ENCODE measurements at regions of chr20 and their contacts with region 1.

Region 1: DNA sequence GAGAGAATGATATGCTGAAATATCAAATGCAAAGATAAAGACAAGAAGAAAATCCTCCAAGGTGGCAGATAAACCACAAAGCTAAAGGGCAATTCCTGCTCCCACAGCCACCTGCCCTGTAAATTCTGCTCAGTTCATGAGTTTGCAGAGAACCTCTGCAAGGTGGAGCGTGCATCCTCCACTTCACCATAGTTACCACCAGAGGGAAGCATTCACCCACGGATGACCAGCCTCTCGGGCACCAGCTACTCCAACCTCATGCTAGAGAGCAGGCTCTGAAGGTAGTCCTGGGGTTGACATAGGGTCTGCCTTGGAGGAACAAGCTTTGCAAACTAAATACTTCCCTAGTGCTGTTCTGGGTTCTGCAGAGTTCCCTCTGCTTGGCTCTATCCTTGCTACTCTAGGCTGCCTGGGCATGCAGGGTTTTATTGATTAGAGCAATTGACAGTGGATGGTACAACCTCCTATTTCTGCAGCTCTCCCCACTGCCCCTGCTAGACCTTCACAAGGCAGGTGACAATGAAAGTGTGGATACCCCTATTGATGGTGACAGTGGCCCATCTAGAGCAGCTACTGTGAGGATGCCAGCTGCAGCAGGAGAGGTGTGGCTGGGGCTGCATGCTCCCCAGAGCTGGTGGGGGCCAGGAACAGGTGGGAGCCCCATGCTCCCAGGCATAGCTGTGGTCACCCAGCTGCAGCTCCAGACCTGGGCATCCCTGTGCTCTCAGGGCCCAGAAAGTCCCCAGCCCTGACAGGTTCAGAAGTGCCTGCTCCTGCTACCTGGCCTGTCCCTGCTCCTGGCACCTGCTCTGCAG is 51.1 kb downstream of the GGTLC1 start:
- DNase-seq: no peak
- H3K4me3 ChIP-seq: no peak overlapping the region
- H3K27me3 ChIP-seq: no peaks in the 10 kb centered on the region
- CTCF ChIP-seq: peak; percentile 82

Region 2: GRCh38 chr20:23691655-23692054 is 245.9 kb before region 1 on chr20:
- CTCF ChIA-PET with region 1: no interaction called
- POLR2A ChIA-PET with region 1: no interaction called
- DNase-seq: no peak
- H3K4me3 ChIP-seq: no peak overlapping the region
- H3K27me3 ChIP-seq: no peaks in the 10 kb centered on the region
- CTCF ChIP-seq: no peak

Region 3: DNA sequence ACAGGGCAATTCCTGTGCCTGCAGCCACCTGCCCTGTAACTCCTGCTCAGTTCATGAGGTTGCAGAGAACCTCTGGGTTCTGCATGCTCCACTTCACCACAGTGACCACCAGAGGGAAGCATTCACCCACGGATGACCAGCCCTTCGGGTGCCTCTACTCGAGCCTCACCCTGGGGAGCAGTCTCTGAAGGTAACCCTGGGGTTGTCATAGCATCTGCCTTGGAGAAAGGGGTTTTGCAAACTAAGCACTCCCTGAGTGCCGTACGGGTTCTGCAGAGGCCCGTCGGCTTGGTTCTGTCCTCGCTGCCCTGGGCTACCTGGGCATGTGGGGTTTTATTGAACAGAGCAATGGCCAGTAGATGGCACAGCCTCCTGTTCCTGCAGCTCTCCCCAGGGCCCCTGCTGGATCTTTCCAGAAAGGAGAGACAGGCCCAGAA is 47.7 kb before region 1 on chr20:
- CTCF ChIA-PET with region 1: interaction called, 25 read pairs
- POLR2A ChIA-PET with region 1: no interaction called
- DNase-seq: no peak
- H3K4me3 ChIP-seq: no peak overlapping the region
- H3K27me3 ChIP-seq: peaks cover 2% of the 10 kb centered on the region
- CTCF ChIP-seq: peak; percentile 83

Measured in BJ (cell line).